ENCODE measurements at regions of chr10 and their contacts with region 1.

Region 1: DNA sequence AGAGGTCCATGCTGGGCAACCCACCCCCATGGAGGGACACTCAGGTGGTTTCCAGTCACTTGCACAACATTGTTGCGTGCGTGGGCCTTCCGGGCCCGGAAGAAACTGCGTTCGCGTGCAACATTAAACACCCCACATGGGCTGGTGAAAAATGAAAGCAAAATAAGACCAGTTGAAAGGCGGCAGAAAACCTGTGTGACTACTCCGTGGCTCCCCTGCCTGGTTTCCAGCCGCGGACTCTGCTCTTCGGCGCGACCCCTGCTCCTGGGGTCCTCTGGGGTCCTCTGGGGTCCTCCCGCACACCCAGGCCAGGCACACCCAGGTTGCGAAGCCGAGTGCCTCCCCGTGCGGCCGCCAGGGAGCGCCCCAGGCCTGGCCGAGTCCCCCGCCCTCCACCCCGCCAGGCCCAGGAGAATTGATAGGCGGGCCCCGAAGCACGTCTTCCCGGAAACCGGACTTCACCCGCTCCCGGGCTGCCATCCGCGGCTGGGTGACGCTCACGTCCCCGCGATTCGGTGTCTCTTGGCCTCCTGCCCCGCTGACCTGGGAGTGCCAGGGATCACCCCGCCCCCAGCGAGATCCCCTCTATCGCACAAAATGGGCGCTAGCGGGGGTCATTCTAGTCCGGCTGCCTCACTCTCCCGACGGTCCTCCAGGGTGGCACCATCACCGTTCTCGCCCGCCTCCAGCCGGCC is 1.9 kb upstream of the SH2D4B start:
- DNase-seq: no peak
- ATAC-seq: no peak
- H3K4me3 ChIP-seq: no peak overlapping the region
- H3K27ac ChIP-seq: no peak overlapping the region
- H3K4me1 ChIP-seq: no peaks in the 10 kb centered on the region
- H3K27me3 ChIP-seq: peaks cover 3 to 19% of the 10 kb centered on the region in 2 experiments; a peak in 3 of 5 replicates
- CTCF ChIP-seq: no peak
- EP300 ChIP-seq: no peak
- POLR2A ChIP-seq: no peak
- RAD21 ChIP-seq: no peak

Region 2: DNA sequence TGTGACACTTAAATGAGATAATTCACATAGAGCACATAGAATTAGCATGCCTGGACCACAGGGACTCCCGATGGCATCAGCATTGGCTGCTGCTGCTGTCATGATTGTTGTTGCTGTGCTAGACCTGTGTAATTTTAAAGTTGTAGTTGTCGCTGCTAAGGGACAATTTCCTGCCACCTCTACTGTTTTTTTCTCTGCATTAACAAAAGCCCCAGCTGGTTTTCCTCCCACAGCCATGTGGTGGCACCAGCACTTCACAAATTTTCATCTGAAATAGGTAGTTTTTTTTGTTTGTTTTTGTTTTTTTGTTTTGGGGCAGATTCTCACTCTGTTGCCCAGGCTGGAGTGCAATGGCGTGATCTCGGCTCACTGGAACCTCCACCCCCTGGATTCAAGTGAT is 152.8 kb before region 1 on chr10:
- CTCF ChIA-PET with region 1: no interaction called
- POLR2A ChIA-PET with region 1: no interaction called
- in situ Hi-C with region 1: no loop called
- intact Hi-C with region 1: loop called (anchors 10 kb)
- DNase-seq: peak; percentile 40
- ATAC-seq: peak; percentile 52; the same call in 2 of the 3 replicates
- H3K4me3 ChIP-seq: no peak overlapping the region
- H3K27ac ChIP-seq: no peak overlapping the region
- H3K4me1 ChIP-seq: peaks cover 10% of the 10 kb centered on the region
- H3K27me3 ChIP-seq: no peaks in the 10 kb centered on the region
- CTCF ChIP-seq: peak; percentile 77
- EP300 ChIP-seq: no peak
- POLR2A ChIP-seq: no peak
- RAD21 ChIP-seq: peak; percentile 78